Heart right ventricle (tissue), 16 donors: ENCODE measurements at regions of chrX and their contacts with region 1.

Region 1: GRCh38 chrX:84318661-84319060 is 130.7 kb upstream of the RPS6KA6 start:
- DNase-seq: no peak
- ATAC-seq: no peak
- H3K4me3 ChIP-seq: no peak overlapping the region
- H3K27ac ChIP-seq: no peak overlapping the region
- H3K4me1 ChIP-seq: no peaks in the 10 kb centered on the region
- H3K27me3 ChIP-seq: no peaks in the 10 kb centered on the region
- CTCF ChIP-seq: no peak

Region 2: GRCh38 chrX:84064164-84064563 is 254.5 kb before region 1 on chrX:
- intact Hi-C with region 1: no loop called
- DNase-seq: no peak
- ATAC-seq: no peak
- H3K4me3 ChIP-seq: no peak overlapping the region
- H3K27ac ChIP-seq: no peak overlapping the region
- H3K4me1 ChIP-seq: no peaks in the 10 kb centered on the region
- H3K27me3 ChIP-seq: no peaks in the 10 kb centered on the region
- CTCF ChIP-seq: no peak

Region 3: DNA sequence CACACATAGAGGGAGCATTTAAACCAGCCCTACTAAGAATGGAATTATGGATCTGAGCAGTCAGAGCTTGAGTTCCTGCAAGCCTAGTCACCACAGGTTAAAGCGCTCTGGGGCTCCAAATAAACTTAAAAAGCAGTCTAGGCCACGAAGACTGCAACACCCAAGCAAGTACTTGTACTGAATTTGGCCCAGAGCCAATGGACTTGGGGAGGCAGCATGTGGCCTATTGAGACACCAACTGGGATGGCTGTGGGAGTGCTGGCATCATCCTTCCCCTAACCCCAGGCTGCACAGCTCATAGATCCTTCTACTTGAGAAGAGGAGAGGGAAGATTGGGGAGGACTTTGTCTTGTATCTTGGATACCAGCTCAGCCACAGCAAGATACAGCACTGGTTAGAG is 19.2 kb before region 1 on chrX:
- intact Hi-C with region 1: loop called in 1 of 10 experiments (anchors 1 kb)
- DNase-seq: no peak
- ATAC-seq: no peak
- H3K4me3 ChIP-seq: no peak overlapping the region
- H3K27ac ChIP-seq: no peak overlapping the region
- H3K4me1 ChIP-seq: no peaks in the 10 kb centered on the region
- H3K27me3 ChIP-seq: no peaks in the 10 kb centered on the region
- CTCF ChIP-seq: no peak